PC-3 (cell line): ENCODE measurements at regions of chr2 and their contacts with region 1.

Region 1: GRCh38 chr2:137838255-137839092 is 125.8 kb upstream of the HNMT start:
- DNase-seq: peak; percentile 68
- ATAC-seq: peak; percentile 61
- H3K4me3 ChIP-seq: no peak overlapping the region
- H3K27ac ChIP-seq: no peak overlapping the region
- H3K4me1 ChIP-seq: no peaks in the 10 kb centered on the region
- H3K27me3 ChIP-seq: peaks cover 40% of the 10 kb centered on the region
- CTCF ChIP-seq: peak; percentile 83

Region 2: DNA sequence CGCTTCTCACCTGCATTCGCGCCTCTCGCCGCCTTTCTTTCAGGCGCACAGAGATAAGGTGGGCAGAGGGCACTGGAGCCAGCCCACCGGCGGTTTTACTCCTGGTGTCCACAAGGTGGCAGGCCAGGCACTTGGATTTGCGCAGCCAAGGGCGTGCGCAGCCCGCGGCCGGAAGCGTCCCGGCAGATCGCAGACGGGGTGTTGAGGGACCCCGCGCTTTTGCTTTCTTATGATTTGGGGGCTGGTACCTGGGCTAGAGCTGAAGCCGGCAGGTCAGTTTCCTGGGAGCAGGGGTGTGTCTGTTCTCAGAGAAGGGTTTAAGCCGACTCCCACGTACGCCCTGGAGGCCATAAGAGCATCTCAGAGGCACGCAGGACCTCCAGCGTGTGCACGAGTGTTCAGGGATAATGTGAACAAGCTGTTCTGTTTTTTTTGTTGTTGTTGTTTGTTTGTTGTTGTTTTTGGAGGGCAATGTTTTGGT is 1414.9 kb before region 1 on chr2:
- CTCF ChIA-PET with region 1: no interaction called
- POLR2A ChIA-PET with region 1: no interaction called
- intact Hi-C with region 1: loop called (anchors 1 kb)
- DNase-seq: peak; percentile 72
- ATAC-seq: peak; percentile 97
- H3K4me3 ChIP-seq: peak overlapping the region; percentile 61
- H3K27ac ChIP-seq: no peak overlapping the region
- H3K4me1 ChIP-seq: peaks cover 9% of the 10 kb centered on the region; the same call in 1 of the 2 replicates
- H3K27me3 ChIP-seq: peaks cover 75% of the 10 kb centered on the region
- CTCF ChIP-seq: peak; percentile 88

Region 3: GRCh38 chr2:136932700-136933099 is 905.8 kb before region 1 on chr2:
- CTCF ChIA-PET with region 1: no interaction called
- POLR2A ChIA-PET with region 1: no interaction called
- intact Hi-C with region 1: loop called (anchors 1 kb)
- DNase-seq: peak; percentile 61
- ATAC-seq: peak; percentile 43; the same call in 1 of the 2 replicates
- H3K4me3 ChIP-seq: no peak overlapping the region
- H3K27ac ChIP-seq: no peak overlapping the region
- H3K4me1 ChIP-seq: no peaks in the 10 kb centered on the region
- H3K27me3 ChIP-seq: peaks cover 10% of the 10 kb centered on the region; the same call in 1 of the 2 replicates
- CTCF ChIP-seq: peak; percentile 80

Region 4: DNA sequence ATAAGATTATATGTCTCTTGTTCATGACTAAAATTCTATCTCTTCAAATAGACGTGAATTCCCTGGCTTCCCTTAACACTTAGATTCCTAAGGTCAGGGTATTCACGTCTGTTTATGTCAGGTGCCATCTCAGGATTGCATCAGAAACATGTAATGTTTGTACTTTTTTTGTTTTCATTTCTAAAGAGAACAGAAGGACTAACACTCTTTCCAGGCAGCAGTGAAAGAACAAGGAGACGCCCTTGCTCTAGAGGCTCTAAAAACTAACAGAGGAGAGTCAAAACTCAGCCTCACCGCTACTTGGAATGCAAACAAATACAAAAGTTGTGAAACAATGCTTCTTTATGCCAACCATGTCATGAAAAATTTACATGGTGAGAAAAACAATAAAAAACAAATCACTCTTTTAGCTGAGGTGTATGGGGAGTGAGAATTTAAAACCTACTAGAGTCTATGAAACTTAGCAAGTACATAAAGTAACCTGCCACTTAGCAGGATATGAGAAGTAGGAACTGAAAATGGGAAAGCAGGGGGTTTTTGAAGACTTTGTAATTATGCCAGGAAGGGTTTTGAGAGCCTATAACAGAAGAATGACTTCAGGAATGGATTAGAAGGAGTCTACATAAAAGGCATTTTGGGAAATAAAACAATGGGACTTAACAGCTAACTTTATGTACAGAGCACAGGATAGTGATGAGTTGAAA is 550.4 kb before region 1 on chr2:
- CTCF ChIA-PET with region 1: no interaction called
- POLR2A ChIA-PET with region 1: no interaction called
- intact Hi-C with region 1: no loop called
- DNase-seq: no peak
- ATAC-seq: no peak
- H3K4me3 ChIP-seq: no peak overlapping the region
- H3K27ac ChIP-seq: no peak overlapping the region
- H3K4me1 ChIP-seq: no peaks in the 10 kb centered on the region
- H3K27me3 ChIP-seq: peaks cover 55% of the 10 kb centered on the region
- CTCF ChIP-seq: no peak

Region 5: GRCh38 chr2:137467246-137467862 is 371.1 kb before region 1 on chr2:
- CTCF ChIA-PET with region 1: no interaction called
- POLR2A ChIA-PET with region 1: no interaction called
- intact Hi-C with region 1: loop called (anchors 1 kb)
- DNase-seq: peak; percentile 71
- ATAC-seq: peak; percentile 73
- H3K4me3 ChIP-seq: no peak overlapping the region
- H3K27ac ChIP-seq: no peak overlapping the region
- H3K4me1 ChIP-seq: no peaks in the 10 kb centered on the region
- H3K27me3 ChIP-seq: peaks cover 24% of the 10 kb centered on the region
- CTCF ChIP-seq: peak; percentile 76

Region 6: GRCh38 chr2:138275881-138276280 is 437.4 kb after region 1 on chr2:
- CTCF ChIA-PET with region 1: no interaction called
- POLR2A ChIA-PET with region 1: no interaction called
- intact Hi-C with region 1: no loop called
- DNase-seq: peak; percentile 88
- ATAC-seq: peak; percentile 91
- H3K4me3 ChIP-seq: peak overlapping the region; percentile 18; the same call in 1 of the 2 replicates
- H3K27ac ChIP-seq: peak overlapping the region; percentile 95
- H3K4me1 ChIP-seq: peaks cover 25% of the 10 kb centered on the region
- H3K27me3 ChIP-seq: no peaks in the 10 kb centered on the region
- CTCF ChIP-seq: no peak